Head of caudate nucleus (tissue), 42 donors: ENCODE measurements at regions of chr5 and their contacts with region 1.

Region 1: GRCh38 chr5:163459922-163460766 is at the starts of genes HMMR and NUDCD2:
- DNase-seq: peak; percentile 92 to 98 (median 96)

Region 2: DNA sequence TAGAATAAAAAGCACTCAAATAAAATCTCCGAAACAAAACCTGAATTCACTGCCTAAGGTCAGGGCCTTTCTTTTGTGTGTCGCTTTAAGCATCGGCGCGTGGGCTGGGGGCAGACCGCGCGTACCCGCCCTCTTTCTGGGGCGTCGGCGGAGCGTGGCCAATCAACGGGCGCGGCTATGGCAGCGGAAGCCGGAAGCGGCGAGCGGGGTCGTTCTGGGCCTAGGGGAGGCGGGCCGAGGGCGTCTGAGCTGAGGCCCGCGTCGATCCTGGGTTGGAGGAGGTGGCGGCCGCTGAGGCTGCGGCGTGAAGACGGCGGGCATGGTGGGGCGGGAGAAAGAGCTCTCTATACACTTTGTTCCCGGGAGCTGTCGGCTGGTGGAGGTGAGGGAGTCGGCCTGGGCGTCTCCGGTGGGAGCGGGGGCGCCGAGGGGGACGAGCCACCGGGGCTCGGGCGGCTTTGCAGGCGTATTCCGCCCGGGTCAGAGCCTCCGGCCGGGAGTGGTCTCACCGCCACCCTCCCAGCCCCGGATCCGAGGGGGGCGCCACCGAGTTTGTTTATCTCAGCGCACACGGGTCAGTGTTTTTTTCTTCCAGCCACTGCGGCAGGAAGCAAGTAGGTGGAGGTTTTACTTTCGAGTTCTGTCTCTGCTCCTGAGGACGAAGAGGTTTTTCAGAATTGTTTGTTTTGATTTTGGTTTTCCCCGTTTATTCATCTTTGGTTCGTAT is 45.4 kb after region 1 on chr5 and contains the start of gene MAT2B:
- intact Hi-C with region 1: loop called (anchors 1 kb)
- DNase-seq: peak; percentile 88 to 98 (median 96)